ENCODE measurements at regions of chr14 and their contacts with region 1.

Region 1: DNA sequence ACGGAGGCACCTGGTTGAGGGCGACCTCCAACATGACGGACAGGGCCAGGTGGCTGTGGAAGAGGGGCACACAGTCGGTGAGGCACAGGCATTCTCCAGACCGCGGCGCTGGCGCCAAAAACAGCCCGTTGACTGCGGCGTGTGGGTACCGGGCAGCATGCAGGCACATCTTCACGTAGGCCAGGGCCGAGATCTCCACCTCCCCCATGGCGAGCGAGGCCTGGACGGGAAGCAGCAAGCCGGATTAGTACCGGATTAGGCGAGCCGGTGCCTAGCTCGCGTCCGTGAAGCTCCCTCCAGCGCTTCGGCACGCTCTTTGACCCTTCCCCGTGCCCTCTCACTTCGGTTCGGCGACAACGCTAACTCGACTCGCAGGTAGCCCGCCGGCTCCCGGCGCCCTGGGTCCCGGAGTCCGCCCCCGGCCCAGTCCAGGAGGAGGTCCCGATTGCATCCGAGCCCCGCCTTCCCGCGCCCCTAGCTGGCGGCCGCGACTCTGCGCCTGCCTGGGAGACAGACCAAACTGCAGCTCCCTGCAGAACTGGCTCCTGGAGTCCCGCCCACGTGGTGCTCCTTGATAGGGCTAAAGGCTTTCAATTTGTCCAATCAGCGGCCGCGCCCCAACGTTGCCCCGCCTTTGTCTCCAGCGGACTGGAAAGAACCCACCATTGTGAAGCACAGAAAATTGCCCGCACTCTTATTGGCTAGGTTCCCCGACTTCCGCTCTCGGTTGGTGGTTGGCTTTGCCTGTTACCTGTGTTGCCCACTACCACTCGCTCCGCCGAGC is at the start of gene EMC9:
- DNase-seq: peak; percentile 99 to 100 (median 100)
- H3K4me3 ChIP-seq: peak within 1 kb of the TSS; percentile 91
- H3K27ac ChIP-seq: peak within 1 kb of the TSS; percentile 63 to 86
- H3K4me1 ChIP-seq: peaks cover 17% of the 10 kb centered on the region
- H3K27me3 ChIP-seq: no peaks in the 10 kb centered on the region
- CTCF ChIP-seq: peak; percentile 55 to 89 (median 87)
- EP300 ChIP-seq: no peak
- POLR2A ChIP-seq: peak; percentile 80
- total RNA-seq, gene EMC9: 13.0 to 26.3 (median 17.3) TPM

Region 2: DNA sequence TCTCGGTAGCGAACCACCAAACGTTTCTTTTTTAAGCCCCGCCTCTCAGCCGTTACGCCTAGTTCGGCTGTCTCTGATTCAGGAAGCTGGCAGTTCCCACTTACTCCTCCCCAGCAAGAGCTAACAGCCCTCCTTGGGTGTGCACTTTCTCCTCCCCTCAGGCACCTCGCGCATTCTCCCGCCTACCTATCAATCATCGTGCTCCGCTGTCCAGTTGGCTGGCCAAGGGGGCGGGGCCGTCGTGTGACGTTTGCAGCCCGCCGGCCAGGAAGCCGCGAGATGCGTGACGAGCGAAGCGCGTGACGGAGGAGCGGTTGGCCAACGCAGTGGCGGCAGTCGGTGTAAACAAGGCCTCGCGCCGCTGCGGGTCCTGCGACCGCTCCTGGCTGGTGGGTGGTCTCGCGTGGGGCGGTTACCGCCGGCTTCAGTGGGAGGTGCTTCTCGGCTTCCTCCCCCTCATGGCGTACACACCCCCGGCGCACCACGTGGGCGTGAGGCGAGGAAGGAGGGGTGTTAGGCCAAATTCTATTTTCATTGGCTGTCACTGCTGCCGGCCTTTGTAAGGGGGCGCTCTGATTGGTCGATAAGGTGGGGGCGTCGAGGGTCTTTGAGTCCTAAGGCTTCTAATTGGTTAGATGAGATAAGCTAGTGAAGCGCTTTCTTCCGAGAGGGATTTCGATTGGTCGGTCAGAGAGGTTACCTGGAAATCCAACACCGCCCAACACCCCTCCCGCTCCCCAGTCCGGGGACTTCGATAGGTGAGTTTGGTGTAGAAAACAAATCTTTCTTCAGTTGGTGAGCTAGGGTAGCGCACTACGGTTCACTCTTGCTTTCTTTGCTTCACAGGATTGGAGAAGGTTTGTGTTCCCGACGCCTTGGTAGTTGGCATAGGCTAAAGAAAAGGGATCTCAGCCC is 26.5 kb before region 1 on chr14 and contains the starts of genes DCAF11 and NRL:
- intact Hi-C with region 1: loop called in 1 of 4 experiments (anchors 2 kb)
- DNase-seq: peak; percentile 98 to 99 (median 99)
- H3K4me3 ChIP-seq: peak within 1 kb of the TSS; percentile 84
- H3K27ac ChIP-seq: peak within 1 kb of the TSS; percentile 97 to 100
- H3K4me1 ChIP-seq: peaks cover 6% of the 10 kb centered on the region
- H3K27me3 ChIP-seq: no peaks in the 10 kb centered on the region
- CTCF ChIP-seq: no peak
- EP300 ChIP-seq: peak; percentile 98
- POLR2A ChIP-seq: peak; percentile 74
- total RNA-seq, gene DCAF11: 34.7 to 71.4 (median 51.5) TPM
- total RNA-seq, gene NRL: 1.0 to 4.1 (median 2.8) TPM

Region 3: DNA sequence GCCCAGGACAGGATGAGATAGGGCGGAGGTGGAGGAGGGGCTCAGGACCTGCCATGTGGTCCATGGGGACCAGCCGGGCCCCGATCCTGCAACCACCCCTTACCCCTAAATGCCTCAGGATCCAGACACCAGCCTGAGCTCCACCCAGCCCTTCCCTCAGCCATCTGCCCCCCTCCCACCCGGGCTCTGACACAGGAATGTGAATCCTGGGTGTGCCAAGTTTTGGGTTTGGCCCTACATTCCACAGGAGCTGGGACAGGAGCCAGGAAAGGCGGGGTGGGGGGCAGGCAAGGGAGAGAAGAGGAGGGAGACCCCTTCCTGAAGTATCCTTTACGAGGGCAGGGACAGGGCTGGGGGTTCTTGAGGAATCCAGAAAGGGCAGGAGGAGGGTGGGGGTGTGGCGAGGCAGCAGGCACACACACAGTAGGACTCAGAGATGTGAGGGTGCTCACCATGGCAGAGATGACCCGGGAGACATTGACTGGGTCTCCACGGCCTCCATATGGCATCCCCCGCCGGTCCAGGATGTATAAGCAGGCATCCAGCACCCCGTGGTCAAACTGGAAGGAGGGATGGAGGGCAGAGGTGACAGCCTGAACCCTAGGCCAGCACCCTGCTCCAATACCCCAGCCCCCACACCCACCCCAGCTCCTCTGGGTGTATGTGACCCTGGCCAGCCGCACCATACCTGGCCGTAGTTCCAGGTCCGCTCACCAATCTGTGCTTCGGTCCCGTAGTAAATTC is 118.1 kb after region 1 on chr14:
- intact Hi-C with region 1: no loop called
- DNase-seq: peak in 4 of 5 donors; percentile 36 to 66 (median 49)
- H3K4me3 ChIP-seq: no peak overlapping the region
- H3K27ac ChIP-seq: no peak overlapping the region
- H3K4me1 ChIP-seq: peaks cover 3% of the 10 kb centered on the region
- H3K27me3 ChIP-seq: no peaks in the 10 kb centered on the region
- CTCF ChIP-seq: no peak
- EP300 ChIP-seq: no peak
- POLR2A ChIP-seq: no peak